Activated T-helper 2 cell treated with anti-CD3 and anti-CD28 coated beads, Interferon-gamma antibody, Interleukin-2, Interleukin-4, amounts not matched to agents 10 μg/mL and 5 μg/mL and 100 μg/mL, durations not matched to agents 14 hours and 24 hours and 36 hours (primary cell): ENCODE measurements at regions of chr12 and their contacts with region 1.

Region 1: GRCh38 chr12:113232840-113233585 is 11.7 kb downstream of the TPCN1 start:
- DNase-seq: peak; percentile 50
- H3K4me3 Mint-ChIP-seq: peak overlapping the region; percentile 61
- H3K27ac Mint-ChIP-seq: peak overlapping the region; percentile 84
- H3K4me1 Mint-ChIP-seq: peaks cover 42% of the 10 kb centered on the region
- H3K27me3 Mint-ChIP-seq: no peaks in the 10 kb centered on the region

Region 2: DNA sequence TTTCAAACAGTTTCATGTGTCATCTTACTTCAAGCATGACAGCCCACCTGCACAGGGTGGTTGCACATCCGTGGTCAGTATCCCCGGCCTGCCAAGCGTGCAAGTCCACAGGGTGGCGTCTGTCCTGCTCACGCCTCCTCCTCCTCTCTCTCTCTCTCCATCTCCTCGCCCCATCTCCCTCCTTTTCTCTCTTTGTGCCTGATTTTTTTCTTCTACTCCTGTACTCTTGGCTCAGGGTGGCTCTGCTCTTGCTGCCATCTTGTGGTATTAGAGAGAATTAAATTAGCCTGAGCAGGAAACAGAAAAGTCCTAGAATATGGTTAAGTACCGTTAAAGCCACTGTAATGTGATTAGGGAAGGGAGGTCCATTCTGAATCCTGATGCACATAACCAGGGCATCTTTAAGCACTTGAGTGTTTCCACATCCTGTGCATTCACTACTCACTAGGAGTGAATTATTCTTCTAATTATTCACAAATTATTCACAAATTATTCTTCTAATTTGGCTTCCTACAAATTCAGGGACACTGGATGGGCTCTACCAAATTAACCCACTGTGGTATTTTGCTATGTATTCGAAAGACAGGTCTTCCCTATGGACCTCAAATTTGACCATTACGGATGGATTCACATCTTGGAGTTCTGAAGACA is 202.0 kb before region 1 on chr12:
- intact Hi-C with region 1: no loop called
- DNase-seq: no peak
- H3K4me3 Mint-ChIP-seq: no peak overlapping the region
- H3K27ac Mint-ChIP-seq: no peak overlapping the region
- H3K4me1 Mint-ChIP-seq: no peaks in the 10 kb centered on the region
- H3K27me3 Mint-ChIP-seq: peaks cover 6% of the 10 kb centered on the region

Region 3: GRCh38 chr12:113196996-113197395 is 36.0 kb before region 1 on chr12:
- intact Hi-C with region 1: loop called (anchors 5 kb)
- DNase-seq: peak; percentile 61
- H3K4me3 Mint-ChIP-seq: no peak overlapping the region
- H3K27ac Mint-ChIP-seq: no peak overlapping the region
- H3K4me1 Mint-ChIP-seq: peaks cover 14% of the 10 kb centered on the region
- H3K27me3 Mint-ChIP-seq: no peaks in the 10 kb centered on the region

Region 4: DNA sequence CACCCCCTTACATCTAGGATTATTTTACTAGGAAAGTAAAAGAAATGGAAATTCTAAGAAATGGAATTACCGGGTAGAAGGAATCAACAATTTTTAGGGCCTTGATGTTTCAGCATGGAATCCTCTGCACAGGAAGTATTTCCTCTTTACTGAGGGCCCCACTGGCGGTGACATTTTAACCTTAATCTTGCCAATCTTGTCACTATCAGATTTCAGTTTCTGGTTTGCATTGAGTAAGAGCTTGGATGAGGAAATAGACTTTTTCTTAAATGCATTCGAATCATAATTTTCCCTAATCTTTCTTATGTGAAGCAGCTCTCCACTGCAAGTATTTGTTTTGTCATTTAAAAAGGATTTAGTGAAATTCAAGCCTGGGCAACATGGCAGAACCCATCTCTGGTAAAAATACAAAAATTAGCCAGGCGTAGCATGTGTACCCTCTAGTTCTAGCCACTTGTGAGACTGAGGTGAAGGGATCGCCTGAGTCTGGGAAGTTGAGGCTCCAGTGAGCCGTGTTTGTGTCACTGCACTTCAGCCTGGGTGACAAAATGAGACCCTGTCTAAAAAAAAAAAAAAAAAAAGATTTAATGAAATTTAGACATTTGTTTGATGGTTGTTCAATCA is 28.9 kb after region 1 on chr12:
- intact Hi-C with region 1: loop called (anchors 1 kb)
- DNase-seq: peak; percentile 38
- H3K4me3 Mint-ChIP-seq: peak overlapping the region; percentile 54
- H3K27ac Mint-ChIP-seq: peak overlapping the region; percentile 52
- H3K4me1 Mint-ChIP-seq: peaks cover 49% of the 10 kb centered on the region
- H3K27me3 Mint-ChIP-seq: no peaks in the 10 kb centered on the region